HEK293 (cell line): ENCODE measurements at regions of chr9 and their contacts with region 1.

Region 1: DNA sequence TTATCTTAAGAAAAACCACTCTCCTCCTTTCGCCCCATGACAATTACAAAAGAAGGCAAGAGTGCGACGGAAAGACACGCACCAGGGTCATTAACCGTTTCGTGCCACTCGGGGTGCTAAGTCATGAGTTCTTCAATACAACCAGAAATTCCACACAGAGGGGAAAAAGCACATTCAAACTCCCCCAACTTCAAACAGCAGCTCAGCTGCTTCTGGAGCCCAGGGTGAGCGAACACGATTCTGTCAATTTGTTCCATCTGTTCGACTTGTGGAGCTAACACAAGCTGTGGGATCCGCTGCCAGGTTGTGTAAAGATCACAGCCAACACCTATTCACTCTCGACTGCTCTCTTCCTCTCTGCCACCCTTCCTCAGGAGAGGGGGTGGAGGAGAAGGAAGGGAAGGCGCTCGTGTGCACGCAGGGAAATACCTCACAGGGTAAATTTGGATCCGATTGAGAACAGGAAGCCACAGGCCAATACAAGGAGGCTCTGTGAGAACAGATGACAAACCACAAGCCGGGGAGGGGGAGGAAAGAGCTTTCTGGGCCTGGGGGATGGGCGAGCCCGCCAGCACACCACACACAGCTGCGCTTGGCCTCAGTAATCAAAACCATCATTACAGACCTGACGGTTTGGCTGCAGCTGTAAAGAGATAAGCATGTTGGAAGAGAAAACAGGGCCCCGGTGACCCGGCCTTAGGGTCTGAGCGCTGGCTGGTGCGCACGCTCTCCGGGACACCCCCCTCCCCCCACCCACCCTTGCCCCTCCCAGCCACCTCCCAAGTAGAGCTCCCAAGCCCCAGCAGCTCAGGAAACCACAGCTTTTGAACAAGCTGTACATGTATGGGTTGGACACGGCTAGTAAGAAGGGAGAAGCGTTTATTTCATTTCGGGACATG is 54.3 kb downstream of the PTCH1 start:
- H3K4me3 ChIP-seq: no peak overlapping the region
- H3K27ac ChIP-seq: peak overlapping the region; percentile 74
- H3K4me1 ChIP-seq: peaks cover 21% of the 10 kb centered on the region
- CTCF ChIP-seq: no peak

Region 2: GRCh38 chr9:95383185-95383673 is 79.3 kb before region 1 on chr9:
- CTCF ChIA-PET with region 1: no interaction called
- POLR2A ChIA-PET with region 1: interaction called, 12 read pairs
- H3K4me3 ChIP-seq: no peak overlapping the region
- H3K27ac ChIP-seq: no peak overlapping the region
- H3K4me1 ChIP-seq: peaks cover 6% of the 10 kb centered on the region
- CTCF ChIP-seq: no peak

Region 3: GRCh38 chr9:95880021-95880690 is 417.7 kb after region 1 on chr9:
- CTCF ChIA-PET with region 1: no interaction called
- POLR2A ChIA-PET with region 1: no interaction called
- H3K4me3 ChIP-seq: no peak overlapping the region
- H3K27ac ChIP-seq: no peak overlapping the region
- H3K4me1 ChIP-seq: peaks cover 5% of the 10 kb centered on the region; the same call in 1 of the 2 replicates
- CTCF ChIP-seq: no peak